ENCODE measurements at regions of chr6 and their contacts with region 1.

Region 1: DNA sequence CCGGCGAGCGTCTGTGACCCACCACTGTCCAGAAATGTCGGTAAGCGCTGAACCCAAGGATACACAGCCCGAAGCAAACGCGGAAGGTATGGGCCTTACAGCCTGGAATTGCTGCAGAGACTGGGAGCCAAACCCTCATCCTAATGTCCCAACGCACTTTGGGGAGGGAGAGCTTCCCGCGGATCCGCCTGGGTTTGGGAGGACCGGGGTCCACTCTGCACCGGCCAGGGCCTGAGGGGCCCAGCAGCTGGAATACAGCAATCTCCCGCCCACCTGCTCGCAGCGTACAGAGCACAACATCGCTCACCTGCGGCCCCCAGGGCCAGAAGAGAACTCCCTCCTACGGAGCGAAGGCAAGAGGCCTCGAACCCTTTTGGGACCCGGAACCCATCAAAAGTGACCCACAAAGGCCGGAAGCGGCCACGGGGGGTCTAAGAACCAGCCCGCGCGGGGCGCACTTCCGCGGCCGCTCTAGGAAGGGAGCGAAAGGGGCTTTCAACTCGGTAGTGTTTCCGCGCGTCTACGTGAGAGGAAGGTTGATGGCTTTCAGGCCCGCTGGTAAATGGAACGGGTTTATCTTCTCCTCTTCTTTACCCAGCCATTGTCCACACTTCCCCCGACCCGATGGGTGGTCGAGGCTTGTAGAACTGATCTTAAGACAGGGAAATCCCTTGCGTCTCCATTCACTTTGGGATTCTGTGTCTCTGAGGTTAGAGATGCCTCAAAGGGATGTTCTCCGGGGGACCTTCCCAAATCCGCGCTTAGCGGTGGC is at the start of gene ZSCAN12:
- DNase-seq: peak; percentile 79
- ATAC-seq: peak; percentile 89
- H3K4me3 Mint-ChIP-seq: peak within 1 kb of the TSS; percentile 97
- H3K27ac Mint-ChIP-seq: peak within 1 kb of the TSS; percentile 95
- H3K4me1 Mint-ChIP-seq: peaks cover 42% of the 10 kb centered on the region
- H3K27me3 Mint-ChIP-seq: peaks cover 34% of the 10 kb centered on the region
- CTCF ChIP-seq: no peak
- total RNA-seq, gene ZSCAN12: 12.8 and 13.0 TPM in 2 replicates

Region 2: DNA sequence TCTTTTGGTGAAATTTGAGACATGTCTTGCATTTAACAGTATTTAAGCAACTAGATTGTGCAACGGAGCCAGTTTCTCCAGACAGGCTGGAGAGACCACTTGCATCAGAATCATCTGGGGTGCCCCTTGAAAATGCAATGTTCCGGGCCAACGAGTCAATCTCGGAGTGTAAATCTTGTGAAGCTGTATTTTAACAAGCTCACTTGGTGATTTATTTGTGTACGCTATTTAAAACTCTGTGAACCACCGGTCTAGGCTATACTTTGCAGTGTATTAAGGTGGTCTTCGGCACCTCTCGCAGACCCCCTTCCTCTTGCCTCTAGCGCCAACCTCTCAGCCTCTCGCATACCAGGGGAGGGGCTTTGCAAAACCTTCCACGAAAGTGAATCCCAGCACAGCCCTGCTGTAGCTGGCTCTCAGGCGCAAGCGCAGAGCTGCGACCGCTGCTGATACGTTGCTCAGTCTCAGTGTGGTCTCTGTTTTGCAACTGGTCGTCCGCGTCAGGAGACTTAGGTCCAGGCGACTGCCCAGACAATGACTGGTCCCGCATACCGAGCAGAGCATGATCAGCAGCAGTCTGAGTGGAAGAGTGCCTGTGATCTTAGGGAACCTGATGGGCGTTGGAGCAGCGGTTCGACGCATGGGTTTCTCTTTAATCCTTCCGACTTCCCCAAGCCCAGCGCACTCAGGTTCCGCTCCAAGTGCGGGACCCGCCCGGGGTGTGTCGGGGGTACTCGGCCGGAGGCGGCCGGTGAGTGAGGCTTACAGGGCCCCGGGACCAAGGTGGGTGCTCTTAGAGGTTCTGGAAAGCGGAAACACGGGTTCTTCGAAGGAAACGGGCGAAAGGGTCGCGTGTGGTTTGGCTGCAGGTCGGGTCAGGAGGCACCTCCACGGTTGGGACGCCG is 1011.0 kb before region 1 on chr6 and contains the start of gene ZNF391:
- CTCF ChIA-PET with region 1: no interaction called
- POLR2A ChIA-PET with region 1: no interaction called
- intact Hi-C with region 1: loop called (anchors 1 kb)
- DNase-seq: peak; percentile 73
- ATAC-seq: peak; percentile 88
- H3K4me3 Mint-ChIP-seq: peak within 1 kb of the TSS; percentile 97
- H3K27ac Mint-ChIP-seq: peak within 1 kb of the TSS; percentile 95
- H3K4me1 Mint-ChIP-seq: peaks cover 13% of the 10 kb centered on the region
- H3K27me3 Mint-ChIP-seq: no peaks in the 10 kb centered on the region
- CTCF ChIP-seq: no peak
- total RNA-seq, gene ZNF391: 4.8 and 5.9 TPM in 2 replicates

Region 3: DNA sequence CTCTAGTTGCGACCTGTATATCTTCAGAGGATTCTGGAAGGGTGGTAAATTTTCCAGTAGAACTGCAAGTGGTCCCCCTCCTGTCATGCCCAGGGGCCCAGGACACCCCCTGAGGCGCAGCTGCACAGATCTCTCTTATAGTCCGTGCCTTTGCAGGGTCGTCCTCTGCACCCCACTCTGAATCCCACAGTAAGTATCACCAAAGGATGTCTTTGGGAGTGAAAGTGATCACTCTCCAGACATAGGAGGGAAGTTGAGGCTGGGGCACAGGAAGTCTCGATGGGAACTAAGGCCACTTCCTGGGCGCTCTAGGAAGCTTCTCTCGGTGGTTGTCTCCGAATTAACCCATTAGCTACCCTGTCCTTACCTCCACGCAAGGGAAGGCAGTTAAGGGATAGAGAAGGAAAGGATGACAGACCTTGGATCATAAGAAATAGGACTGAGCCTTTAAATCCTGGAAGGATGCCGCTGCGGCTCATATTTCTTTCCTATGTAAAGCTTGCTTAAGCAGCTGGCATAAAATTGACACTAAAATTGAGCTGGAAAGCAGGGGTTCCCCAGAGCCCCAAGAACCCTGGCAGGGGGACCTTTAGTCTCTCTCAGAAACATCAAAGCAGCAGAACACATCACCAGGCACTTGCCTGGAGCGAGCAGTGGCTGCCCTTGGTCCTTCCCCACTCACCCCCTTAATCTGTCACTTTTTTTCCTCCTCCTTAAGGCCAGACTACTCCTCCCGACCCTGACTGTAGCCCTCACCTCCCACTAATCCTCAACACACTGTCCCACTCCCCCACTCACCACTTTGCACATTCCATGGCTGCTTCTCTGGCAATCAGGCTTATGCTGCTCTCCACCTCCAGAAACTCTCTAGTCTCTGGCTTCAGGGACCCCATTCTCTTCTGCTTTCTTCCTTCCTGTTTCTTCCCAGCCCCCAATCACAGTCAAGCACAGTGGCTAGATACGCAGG is 147.2 kb before region 1 on chr6 and contains the start of gene ZKSCAN4:
- CTCF ChIA-PET with region 1: no interaction called
- POLR2A ChIA-PET with region 1: interaction called, 8 read pairs
- intact Hi-C with region 1: loop called (anchors 1 kb)
- DNase-seq: peak; percentile 57
- ATAC-seq: peak; percentile 90
- H3K4me3 Mint-ChIP-seq: peak within 1 kb of the TSS; percentile 95
- H3K27ac Mint-ChIP-seq: peak within 1 kb of the TSS; percentile 80
- H3K4me1 Mint-ChIP-seq: peaks cover 30% of the 10 kb centered on the region
- H3K27me3 Mint-ChIP-seq: peaks cover 2% of the 10 kb centered on the region
- CTCF ChIP-seq: no peak
- total RNA-seq, gene ZKSCAN4: 10.5 and 11.1 TPM in 2 replicates

Region 4: GRCh38 chr6:28349892-28350737 is 49.4 kb before region 1 on chr6 and contains the start of gene ZKSCAN3:
- CTCF ChIA-PET with region 1: no interaction called
- POLR2A ChIA-PET with region 1: no interaction called
- intact Hi-C with region 1: loop called (anchors 1 kb)
- DNase-seq: peak; percentile 68
- ATAC-seq: peak; percentile 100
- H3K4me3 Mint-ChIP-seq: peak within 1 kb of the TSS; percentile 96
- H3K27ac Mint-ChIP-seq: peak within 1 kb of the TSS; percentile 94
- H3K4me1 Mint-ChIP-seq: peaks cover 28% of the 10 kb centered on the region
- H3K27me3 Mint-ChIP-seq: peaks cover 7% of the 10 kb centered on the region
- CTCF ChIP-seq: no peak
- total RNA-seq, gene ZKSCAN3: 5.6 and 6.3 TPM in 2 replicates

Region 5: GRCh38 chr6:28383235-28384142 is 16.0 kb before region 1 on chr6:
- CTCF ChIA-PET with region 1: interaction called, 11 read pairs
- POLR2A ChIA-PET with region 1: interaction called, 37 read pairs
- intact Hi-C with region 1: loop called (anchors 1 kb)
- DNase-seq: peak; percentile 77
- ATAC-seq: peak; percentile 98
- H3K4me3 Mint-ChIP-seq: peak overlapping the region; percentile 88
- H3K27ac Mint-ChIP-seq: peak overlapping the region; percentile 94
- H3K4me1 Mint-ChIP-seq: peaks cover 18% of the 10 kb centered on the region
- H3K27me3 Mint-ChIP-seq: no peaks in the 10 kb centered on the region
- CTCF ChIP-seq: no peak

Region 6: DNA sequence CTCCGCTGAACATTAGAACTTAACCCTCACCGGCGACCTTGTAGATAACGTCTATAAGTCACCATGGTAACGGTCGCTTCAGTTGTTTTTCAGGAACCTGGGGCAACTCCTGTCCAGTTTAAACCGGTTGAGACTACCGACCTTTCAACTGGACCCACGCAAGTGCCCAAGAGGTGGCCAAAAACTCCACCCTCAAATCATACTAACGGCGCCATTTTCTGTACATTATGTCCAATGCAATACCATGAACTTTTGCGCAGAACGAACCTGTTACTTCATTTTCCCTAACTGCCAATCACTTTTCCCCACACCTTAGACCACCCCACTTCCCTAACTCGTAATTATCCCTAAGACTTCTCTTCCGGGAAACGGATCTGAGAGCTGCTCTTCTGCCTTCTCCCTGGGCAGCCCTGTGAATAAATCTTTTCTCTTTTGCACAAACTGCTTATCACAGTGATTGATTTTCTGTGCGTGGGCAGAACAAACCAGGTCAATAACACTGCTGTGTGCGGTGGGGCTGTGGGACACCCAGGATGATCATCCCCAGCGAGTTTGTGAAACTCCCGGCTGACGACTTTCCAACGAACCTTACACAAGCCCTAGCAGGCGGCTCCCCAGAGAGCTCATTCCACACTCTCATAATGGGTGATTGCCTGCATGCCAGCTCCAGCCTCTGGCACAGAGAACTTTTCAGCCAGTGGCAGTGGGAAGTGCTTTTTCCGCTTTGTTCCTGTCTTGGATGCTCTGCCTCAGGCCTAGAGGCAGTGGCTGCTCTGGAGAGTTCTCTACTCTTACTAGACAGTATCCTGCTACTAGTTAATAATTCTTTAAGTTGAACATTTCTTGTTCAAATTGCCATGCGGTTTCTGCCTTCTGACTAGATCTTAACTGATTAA is 154.7 kb after region 1 on chr6:
- CTCF ChIA-PET with region 1: no interaction called
- POLR2A ChIA-PET with region 1: no interaction called
- intact Hi-C with region 1: no loop called
- DNase-seq: no peak
- ATAC-seq: no peak
- H3K4me3 Mint-ChIP-seq: no peak overlapping the region
- H3K27ac Mint-ChIP-seq: no peak overlapping the region
- H3K4me1 Mint-ChIP-seq: no peaks in the 10 kb centered on the region
- H3K27me3 Mint-ChIP-seq: peaks cover 41% of the 10 kb centered on the region
- CTCF ChIP-seq: no peak

Measured in activated B cell treated with CpG ODN at 0.5 μM for 24 hours (primary cell).